SK-N-SH (cell line): ENCODE measurements at regions of chr2 and their contacts with region 1.

Region 1: GRCh38 chr2:212777020-212777491 is 238.5 kb upstream of the ERBB4 start:
- DNase-seq: peak; percentile 29
- H3K4me3 ChIP-seq: peak overlapping the region in 1 of 2 experiments; percentile 25; a peak in 1 of 4 replicates
- H3K27ac ChIP-seq: no peak overlapping the region
- H3K4me1 ChIP-seq: peaks cover 0 to 4% of the 10 kb centered on the region in 2 experiments; a peak in 2 of 4 replicates
- H3K27me3 ChIP-seq: no peaks in the 10 kb centered on the region
- CTCF ChIP-seq: peak; percentile 83
- EP300 ChIP-seq: no peak
- RAD21 ChIP-seq: peak; percentile 74

Region 2: DNA sequence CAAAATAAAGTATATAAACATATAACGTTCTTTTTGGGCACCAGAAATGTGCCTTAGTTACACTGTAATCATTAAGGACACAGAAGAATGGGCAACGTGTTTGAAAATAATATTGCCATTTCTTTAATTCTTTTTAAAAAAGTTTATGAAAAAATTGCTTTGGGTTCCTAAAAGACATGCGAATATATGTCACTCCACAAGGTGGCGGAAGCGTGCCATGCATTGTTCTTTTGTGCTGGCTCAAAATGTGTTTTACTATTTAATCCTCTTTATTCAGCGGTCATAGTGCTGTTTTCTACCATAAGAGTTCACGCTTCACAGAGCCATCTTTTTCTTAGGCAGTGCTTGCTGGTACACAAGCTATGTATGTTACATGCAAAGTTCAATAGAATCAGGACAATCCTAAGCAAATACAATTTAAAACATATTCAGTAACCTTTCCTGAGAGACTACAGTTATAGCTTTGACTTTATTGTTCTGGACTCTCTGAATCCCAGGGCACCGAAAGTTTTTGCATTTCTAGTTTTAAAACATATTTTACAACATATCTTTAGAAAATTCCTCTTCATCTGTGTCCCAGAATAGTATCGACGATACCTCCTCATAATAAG is 90.7 kb before region 1 on chr2:
- CTCF ChIA-PET with region 1: interaction called, 15 read pairs
- POLR2A ChIA-PET with region 1: no interaction called
- DNase-seq: peak; percentile 53
- H3K4me3 ChIP-seq: no peak overlapping the region; a peak in 1 of 4 replicates
- H3K27ac ChIP-seq: no peak overlapping the region
- H3K4me1 ChIP-seq: no peaks in the 10 kb centered on the region; a peak in 3 of 4 replicates
- H3K27me3 ChIP-seq: no peaks in the 10 kb centered on the region
- CTCF ChIP-seq: peak; percentile 93
- EP300 ChIP-seq: no peak
- RAD21 ChIP-seq: peak; percentile 95

Region 3: GRCh38 chr2:212892193-212892592 is 115.1 kb after region 1 on chr2:
- CTCF ChIA-PET with region 1: interaction called, 22 read pairs
- POLR2A ChIA-PET with region 1: no interaction called
- DNase-seq: peak; percentile 34
- H3K4me3 ChIP-seq: no peak overlapping the region
- H3K27ac ChIP-seq: no peak overlapping the region
- H3K4me1 ChIP-seq: no peaks in the 10 kb centered on the region; a peak in 1 of 4 replicates
- H3K27me3 ChIP-seq: no peaks in the 10 kb centered on the region
- CTCF ChIP-seq: peak; percentile 57
- EP300 ChIP-seq: no peak
- RAD21 ChIP-seq: peak; percentile 57

Region 4: GRCh38 chr2:213151437-213152064 is 374.5 kb after region 1 on chr2 and contains the start of gene IKZF2:
- CTCF ChIA-PET with region 1: interaction called, 73 read pairs
- POLR2A ChIA-PET with region 1: no interaction called
- DNase-seq: peak; percentile 88
- H3K4me3 ChIP-seq: peak within 1 kb of the TSS; percentile 84 to 85
- H3K27ac ChIP-seq: peak within 1 kb of the TSS; percentile 90 to 95
- H3K4me1 ChIP-seq: peaks cover 4 to 5% of the 10 kb centered on the region in 2 experiments
- H3K27me3 ChIP-seq: no peaks in the 10 kb centered on the region
- CTCF ChIP-seq: no peak
- EP300 ChIP-seq: no peak
- RAD21 ChIP-seq: no peak
- polyA plus RNA-seq, gene IKZF2: 1.3 and 1.4 TPM in 2 replicates

Region 5: GRCh38 chr2:213161759-213162515 is 384.9 kb after region 1 on chr2:
- CTCF ChIA-PET with region 1: interaction called, 16 read pairs
- POLR2A ChIA-PET with region 1: no interaction called
- DNase-seq: no peak
- H3K4me3 ChIP-seq: no peak overlapping the region
- H3K27ac ChIP-seq: peak overlapping the region; percentile 3 to 57; a peak in 2 of 4 replicates
- H3K4me1 ChIP-seq: peaks cover 0 to 10% of the 10 kb centered on the region in 2 experiments; a peak in 1 of 4 replicates
- H3K27me3 ChIP-seq: no peaks in the 10 kb centered on the region
- CTCF ChIP-seq: no peak
- EP300 ChIP-seq: no peak
- RAD21 ChIP-seq: no peak

Region 6: DNA sequence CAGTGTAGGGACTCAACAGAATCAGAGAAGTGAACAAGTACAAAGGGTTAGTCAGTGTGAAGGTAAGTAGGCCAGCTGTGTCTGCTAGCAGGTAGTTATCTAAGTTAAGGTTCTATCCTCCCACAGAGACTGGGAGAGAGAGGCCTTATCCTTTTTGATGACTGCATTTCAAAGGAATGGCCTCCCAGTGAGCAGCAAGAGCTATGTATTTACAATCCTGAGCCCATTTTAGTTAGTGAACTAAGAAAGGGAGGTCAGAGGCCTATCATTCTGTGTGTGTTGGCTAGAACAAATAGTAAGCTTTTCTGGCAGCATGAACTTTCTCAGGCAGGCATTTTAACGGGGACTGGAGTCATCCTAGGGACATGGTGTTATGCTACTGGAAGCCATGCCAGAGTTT is 1816.7 kb after region 1 on chr2:
- CTCF ChIA-PET with region 1: no interaction called
- POLR2A ChIA-PET with region 1: no interaction called
- DNase-seq: no peak
- H3K4me3 ChIP-seq: no peak overlapping the region
- H3K27ac ChIP-seq: no peak overlapping the region
- H3K4me1 ChIP-seq: no peaks in the 10 kb centered on the region; a peak in 1 of 4 replicates
- H3K27me3 ChIP-seq: no peaks in the 10 kb centered on the region
- CTCF ChIP-seq: no peak
- EP300 ChIP-seq: no peak
- RAD21 ChIP-seq: no peak